Activated B cell treated with CpG ODN at 0.5 μM for 24 hours (primary cell): ENCODE measurements at regions of chr12 and their contacts with region 1.

Region 1: DNA sequence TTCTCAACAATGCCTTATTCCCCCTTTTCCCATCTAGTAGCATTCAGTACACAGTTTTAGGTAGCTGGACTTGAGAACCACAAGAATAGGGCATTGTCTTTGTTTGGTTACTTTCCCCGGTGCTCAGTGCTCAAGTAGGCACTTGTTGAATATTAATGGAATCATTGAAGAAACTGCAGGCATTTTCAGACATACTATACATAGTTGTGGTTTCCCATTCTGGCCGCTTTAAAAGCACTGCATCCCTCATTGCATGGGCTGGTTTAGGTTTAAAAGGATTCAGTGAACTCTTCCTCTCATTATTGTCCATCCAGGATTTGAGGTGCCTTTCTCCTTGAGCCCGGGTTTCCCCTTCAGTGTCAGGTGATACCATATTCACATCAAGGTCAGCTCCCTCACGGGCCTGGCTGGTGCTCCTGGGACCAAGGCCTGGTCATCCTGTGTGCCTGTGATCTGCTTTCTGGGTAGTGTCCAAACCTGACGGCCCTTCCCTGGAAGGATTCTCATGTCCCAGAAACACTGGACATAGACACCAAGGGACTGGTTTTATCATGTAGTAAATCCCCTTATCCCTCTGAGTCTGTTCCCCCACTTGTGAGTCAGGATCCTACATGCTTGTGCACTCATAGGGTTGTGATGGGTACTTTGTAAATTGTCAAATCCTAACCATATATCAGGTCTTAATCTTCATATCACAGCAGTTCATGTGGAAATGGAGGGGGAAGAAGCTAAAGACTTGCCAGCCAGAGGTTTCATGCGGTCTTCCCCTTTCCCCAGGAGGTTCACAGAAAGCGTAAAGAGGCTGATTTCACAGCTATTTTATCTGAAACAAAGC is 7.4 kb downstream of the TCP11L2 start:
- DNase-seq: no peak
- ATAC-seq: no peak
- H3K4me3 Mint-ChIP-seq: no peak overlapping the region
- H3K27ac Mint-ChIP-seq: peak overlapping the region; percentile 37
- H3K4me1 Mint-ChIP-seq: peaks cover 60% of the 10 kb centered on the region
- H3K27me3 Mint-ChIP-seq: no peaks in the 10 kb centered on the region
- CTCF ChIP-seq: no peak

Region 2: DNA sequence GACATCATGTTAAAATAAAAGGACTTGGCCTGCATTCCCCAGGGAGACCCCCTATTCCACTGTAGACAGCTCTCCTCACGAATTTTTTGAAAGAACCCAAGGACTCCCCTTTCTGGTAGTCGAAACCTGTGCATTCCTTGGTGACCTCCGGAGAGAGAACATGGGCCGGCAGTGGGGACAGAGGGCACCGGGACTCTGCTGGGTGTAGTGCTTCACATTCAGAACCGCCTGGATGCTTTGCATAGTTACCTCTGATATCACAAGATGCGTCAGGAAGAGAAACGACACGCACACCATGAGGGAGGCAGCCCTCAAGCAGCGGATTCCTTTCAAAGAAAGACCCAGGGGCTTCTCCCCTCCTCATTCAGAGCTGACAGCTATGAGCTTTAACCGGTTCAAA is 71.7 kb before region 1 on chr12:
- CTCF ChIA-PET with region 1: no interaction called
- POLR2A ChIA-PET with region 1: interaction called, 10 read pairs
- intact Hi-C with region 1: no loop called
- DNase-seq: no peak
- ATAC-seq: no peak
- H3K4me3 Mint-ChIP-seq: no peak overlapping the region
- H3K27ac Mint-ChIP-seq: no peak overlapping the region
- H3K4me1 Mint-ChIP-seq: peaks cover 4% of the 10 kb centered on the region
- H3K27me3 Mint-ChIP-seq: peaks cover 2% of the 10 kb centered on the region
- CTCF ChIP-seq: no peak

Region 3: GRCh38 chr12:106292339-106292738 is 17.5 kb before region 1 on chr12:
- CTCF ChIA-PET with region 1: no interaction called
- POLR2A ChIA-PET with region 1: no interaction called
- intact Hi-C with region 1: no loop called
- DNase-seq: no peak
- ATAC-seq: no peak
- H3K4me3 Mint-ChIP-seq: no peak overlapping the region
- H3K27ac Mint-ChIP-seq: no peak overlapping the region
- H3K4me1 Mint-ChIP-seq: peaks cover 23% of the 10 kb centered on the region
- H3K27me3 Mint-ChIP-seq: no peaks in the 10 kb centered on the region
- CTCF ChIP-seq: no peak

Region 4: DNA sequence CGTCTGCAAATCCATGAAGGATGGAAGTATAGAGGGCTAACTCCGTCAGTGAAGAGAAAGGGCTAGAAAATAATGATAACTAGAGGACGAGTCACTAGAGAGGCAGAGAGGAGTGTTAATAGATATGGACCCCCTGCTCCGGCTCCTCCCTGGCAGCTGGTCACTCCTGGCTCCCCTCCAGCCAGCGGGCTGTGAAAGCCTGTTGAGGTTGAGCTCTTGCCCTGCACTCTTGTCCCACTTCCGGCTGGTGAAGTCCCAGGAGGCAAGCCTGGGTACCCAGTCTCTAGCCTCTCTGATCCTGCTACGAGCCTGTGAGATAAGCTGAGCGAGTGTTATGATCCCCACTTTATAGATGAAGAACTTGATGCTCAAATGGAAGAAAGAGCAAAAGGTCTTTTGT is 363.3 kb after region 1 on chr12:
- CTCF ChIA-PET with region 1: no interaction called
- POLR2A ChIA-PET with region 1: no interaction called
- intact Hi-C with region 1: no loop called
- DNase-seq: no peak
- ATAC-seq: no peak
- H3K4me3 Mint-ChIP-seq: no peak overlapping the region
- H3K27ac Mint-ChIP-seq: no peak overlapping the region
- H3K4me1 Mint-ChIP-seq: no peaks in the 10 kb centered on the region
- H3K27me3 Mint-ChIP-seq: peaks cover 64% of the 10 kb centered on the region
- CTCF ChIP-seq: no peak